Endothelial cell of umbilical vein (primary cell): ENCODE measurements at regions of chr3 and their contacts with region 1.

Region 1: DNA sequence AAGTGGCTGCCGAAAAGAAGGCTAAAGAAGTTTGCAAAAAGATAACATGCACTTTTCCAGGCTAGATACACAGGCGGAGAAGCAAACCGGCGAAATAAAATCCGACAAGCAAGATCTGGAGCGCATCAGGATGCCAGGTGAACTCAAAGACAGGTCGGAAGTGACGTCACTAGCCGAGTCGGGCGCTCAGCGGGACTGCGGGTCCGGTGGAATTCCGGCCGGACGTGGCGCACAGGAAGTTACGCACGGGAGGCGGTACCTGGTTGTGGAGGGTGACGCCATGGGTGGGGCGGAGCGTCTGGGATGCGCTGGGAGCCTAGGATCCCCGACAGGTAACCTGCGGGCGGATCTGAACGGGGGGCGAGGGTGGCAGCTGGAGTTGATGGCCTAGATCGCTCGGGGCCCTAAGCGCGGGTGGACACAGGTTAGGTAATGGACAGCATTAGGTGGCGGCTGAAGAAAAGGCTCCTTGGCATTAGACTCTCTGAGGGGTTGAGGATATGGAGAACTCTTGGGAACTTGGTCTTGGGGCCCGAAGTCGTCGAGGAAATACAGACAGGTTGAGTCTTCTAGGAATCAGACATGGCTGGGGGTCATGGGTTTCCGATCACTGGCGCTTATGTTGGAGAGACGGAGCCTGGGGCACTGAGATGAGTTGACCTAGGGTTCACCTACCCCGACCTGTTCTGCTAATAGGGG is 29.0 kb upstream of the EHHADH start:
- DNase-seq: peak; percentile 88
- H3K4me3 ChIP-seq: peak overlapping the region; percentile 41 to 77 (median 57)
- H3K27ac ChIP-seq: peak overlapping the region; percentile 54
- H3K4me1 ChIP-seq: peaks cover 9% of the 10 kb centered on the region
- H3K27me3 ChIP-seq: peaks cover 0 to 2% of the 10 kb centered on the region in 2 experiments
- CTCF ChIP-seq: no peak
- POLR2A ChIP-seq: peak; percentile 70

Region 2: GRCh38 chr3:185253645-185254410 is 29.0 kb before region 1 on chr3 and contains the start of gene EHHADH:
- CTCF ChIA-PET with region 1: no interaction called
- POLR2A ChIA-PET with region 1: no interaction called
- dilution Hi-C with region 1: no loop called
- intact Hi-C with region 1: loop called (anchors 1 kb)
- DNase-seq: peak; percentile 70
- H3K4me3 ChIP-seq: peak within 1 kb of the TSS; percentile 47 to 82 (median 72)
- H3K27ac ChIP-seq: no peak within 1 kb of the TSS
- H3K4me1 ChIP-seq: no peaks in the 10 kb centered on the region
- H3K27me3 ChIP-seq: no peaks in the 10 kb centered on the region
- CTCF ChIP-seq: no peak
- POLR2A ChIP-seq: peak; percentile 90
- total RNA-seq, gene EHHADH: 5.8 and 6.2 TPM in 2 replicates

Region 3: GRCh38 chr3:185297867-185298266 is 15.0 kb after region 1 on chr3:
- CTCF ChIA-PET with region 1: no interaction called
- POLR2A ChIA-PET with region 1: no interaction called
- dilution Hi-C with region 1: no loop called
- intact Hi-C with region 1: no loop called
- DNase-seq: no peak
- H3K4me3 ChIP-seq: no peak overlapping the region
- H3K27ac ChIP-seq: no peak overlapping the region
- H3K4me1 ChIP-seq: no peaks in the 10 kb centered on the region
- H3K27me3 ChIP-seq: no peaks in the 10 kb centered on the region
- CTCF ChIP-seq: no peak
- POLR2A ChIP-seq: no peak

Region 4: GRCh38 chr3:185460719-185461350 is 178.0 kb after region 1 on chr3:
- CTCF ChIA-PET with region 1: no interaction called
- POLR2A ChIA-PET with region 1: no interaction called
- dilution Hi-C with region 1: no loop called
- intact Hi-C with region 1: no loop called
- DNase-seq: peak; percentile 37
- H3K4me3 ChIP-seq: no peak overlapping the region
- H3K27ac ChIP-seq: no peak overlapping the region
- H3K4me1 ChIP-seq: no peaks in the 10 kb centered on the region
- H3K27me3 ChIP-seq: no peaks in the 10 kb centered on the region
- CTCF ChIP-seq: no peak
- POLR2A ChIP-seq: no peak